ENCODE measurements at regions of chr12 and their contacts with region 1.

Region 1: DNA sequence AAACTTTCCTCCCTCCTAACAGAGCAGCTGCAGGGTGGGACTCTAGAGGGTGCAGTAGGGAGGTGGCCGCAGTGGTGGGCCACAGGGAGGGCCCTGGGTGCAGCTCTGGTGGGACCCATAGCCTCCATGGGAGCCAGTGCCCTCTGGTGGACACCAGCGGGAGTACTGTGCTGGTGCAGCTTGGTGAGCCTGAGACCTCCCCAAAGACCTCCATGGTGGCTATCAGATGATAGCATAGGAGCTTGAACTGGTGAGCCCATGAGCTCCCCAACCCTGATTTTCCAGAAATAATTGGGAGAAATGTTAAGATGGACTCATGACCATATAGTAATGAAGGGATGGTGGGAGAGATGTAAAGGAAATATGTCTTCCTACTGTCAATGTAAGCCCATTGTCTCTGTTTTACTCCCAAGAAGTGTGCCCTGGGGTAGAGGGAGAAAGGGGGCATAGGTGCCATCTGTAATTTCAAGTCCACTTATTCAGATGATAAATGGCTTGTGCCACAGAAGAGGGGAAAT is 98.7 kb downstream of the GAS2L3 start:
- DNase-seq: peak; percentile 85
- ATAC-seq: peak; percentile 97
- H3K4me3 Mint-ChIP-seq: no peak overlapping the region
- H3K27ac Mint-ChIP-seq: no peak overlapping the region
- H3K4me1 Mint-ChIP-seq: no peaks in the 10 kb centered on the region
- H3K27me3 Mint-ChIP-seq: no peaks in the 10 kb centered on the region; the same call in 1 of the 2 replicates
- CTCF ChIP-seq: peak; percentile 79

Region 2: GRCh38 chr12:100348657-100349454 is 323.3 kb before region 1 on chr12:
- CTCF ChIA-PET with region 1: interaction called, 12 read pairs
- POLR2A ChIA-PET with region 1: no interaction called
- DNase-seq: no peak
- ATAC-seq: peak; percentile 52
- H3K4me3 Mint-ChIP-seq: no peak overlapping the region
- H3K27ac Mint-ChIP-seq: no peak overlapping the region
- H3K4me1 Mint-ChIP-seq: peaks cover 5% of the 10 kb centered on the region; the same call in 1 of the 2 replicates
- H3K27me3 Mint-ChIP-seq: no peaks in the 10 kb centered on the region
- CTCF ChIP-seq: peak; percentile 24; the same call in 1 of the 2 replicates

Region 3: GRCh38 chr12:100504804-100505203 is 167.3 kb before region 1 on chr12:
- CTCF ChIA-PET with region 1: no interaction called
- POLR2A ChIA-PET with region 1: no interaction called
- DNase-seq: no peak
- ATAC-seq: no peak
- H3K4me3 Mint-ChIP-seq: no peak overlapping the region
- H3K27ac Mint-ChIP-seq: peak overlapping the region; percentile 18; the same call in 1 of the 2 replicates
- H3K4me1 Mint-ChIP-seq: no peaks in the 10 kb centered on the region
- H3K27me3 Mint-ChIP-seq: no peaks in the 10 kb centered on the region
- CTCF ChIP-seq: no peak

Region 4: DNA sequence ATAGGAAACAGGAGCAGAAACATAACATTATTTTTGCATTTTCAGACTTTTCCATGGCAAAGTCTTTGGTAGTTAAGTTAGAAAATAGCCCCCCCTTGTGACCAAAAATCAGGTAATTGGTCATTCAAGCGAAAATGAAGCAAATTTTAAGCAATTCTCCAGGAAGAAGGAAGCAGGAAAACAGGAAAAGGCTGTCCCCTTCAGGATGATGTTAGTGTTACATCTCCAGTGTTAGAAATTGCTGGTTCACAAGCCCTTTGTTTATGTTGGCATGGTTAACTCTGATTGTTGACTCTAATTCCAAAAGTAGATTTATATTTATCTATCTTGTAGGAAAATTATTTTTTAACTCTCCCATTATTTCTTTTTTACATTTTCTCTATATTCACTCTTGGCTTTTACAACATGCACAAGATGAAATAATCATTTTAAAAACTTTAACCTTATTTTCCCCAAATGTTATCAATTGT is 117.5 kb before region 1 on chr12:
- CTCF ChIA-PET with region 1: interaction called, 13 read pairs
- POLR2A ChIA-PET with region 1: no interaction called
- DNase-seq: no peak
- ATAC-seq: peak; percentile 89
- H3K4me3 Mint-ChIP-seq: no peak overlapping the region
- H3K27ac Mint-ChIP-seq: no peak overlapping the region
- H3K4me1 Mint-ChIP-seq: peaks cover 5% of the 10 kb centered on the region; the same call in 1 of the 2 replicates
- H3K27me3 Mint-ChIP-seq: no peaks in the 10 kb centered on the region
- CTCF ChIP-seq: peak; percentile 84

Region 5: GRCh38 chr12:100661300-100661951 is 10.7 kb before region 1 on chr12:
- CTCF ChIA-PET with region 1: interaction called, 33 read pairs
- POLR2A ChIA-PET with region 1: no interaction called
- DNase-seq: no peak
- ATAC-seq: no peak; the same call in 1 of the 2 replicates
- H3K4me3 Mint-ChIP-seq: no peak overlapping the region
- H3K27ac Mint-ChIP-seq: no peak overlapping the region
- H3K4me1 Mint-ChIP-seq: peaks cover 12% of the 10 kb centered on the region
- H3K27me3 Mint-ChIP-seq: peaks cover 19% of the 10 kb centered on the region
- CTCF ChIP-seq: no peak

Region 6: GRCh38 chr12:100699209-100699608 is 27.1 kb after region 1 on chr12:
- CTCF ChIA-PET with region 1: interaction called, 17 read pairs
- POLR2A ChIA-PET with region 1: no interaction called
- DNase-seq: no peak
- ATAC-seq: no peak
- H3K4me3 Mint-ChIP-seq: no peak overlapping the region
- H3K27ac Mint-ChIP-seq: no peak overlapping the region
- H3K4me1 Mint-ChIP-seq: peaks cover 8% of the 10 kb centered on the region
- H3K27me3 Mint-ChIP-seq: no peaks in the 10 kb centered on the region
- CTCF ChIP-seq: no peak

Region 7: DNA sequence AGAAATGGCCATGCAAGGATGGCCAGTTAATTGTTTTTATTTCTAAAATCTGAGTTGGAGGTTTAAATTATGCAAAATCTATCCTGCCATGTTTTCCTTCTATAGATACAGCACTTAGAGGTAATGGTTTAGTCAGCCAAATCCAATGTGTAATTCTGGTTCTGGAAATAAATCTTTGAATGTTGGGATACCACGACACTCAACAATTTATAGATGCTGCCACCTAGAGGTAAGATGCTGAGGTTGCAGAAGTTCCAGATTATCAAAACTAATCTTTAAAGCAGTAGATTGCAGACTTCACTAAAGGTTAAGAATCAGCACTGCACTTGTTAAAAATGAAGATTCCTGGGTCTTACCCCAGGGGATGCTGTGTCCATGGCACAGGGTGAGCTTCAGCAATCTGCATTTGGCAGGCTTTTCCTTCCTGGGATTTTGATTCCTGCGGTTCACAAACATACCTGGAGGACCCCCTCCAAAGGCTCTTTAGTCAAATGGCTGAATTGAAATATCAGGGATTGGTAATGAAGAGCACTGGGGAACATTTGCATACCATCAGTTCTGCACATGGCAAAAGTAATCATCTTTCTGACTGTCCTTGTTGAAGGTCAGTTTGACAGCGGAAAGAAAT is 69.1 kb after region 1 on chr12:
- CTCF ChIA-PET with region 1: interaction called, 22 read pairs
- POLR2A ChIA-PET with region 1: no interaction called
- DNase-seq: no peak
- ATAC-seq: peak; percentile 34
- H3K4me3 Mint-ChIP-seq: no peak overlapping the region
- H3K27ac Mint-ChIP-seq: no peak overlapping the region
- H3K4me1 Mint-ChIP-seq: 0 out of 2 replicates have a peak, but pooled peaks cover 2% of the 10 kb centered on the region
- H3K27me3 Mint-ChIP-seq: no peaks in the 10 kb centered on the region
- CTCF ChIP-seq: peak; percentile 60

Region 8: DNA sequence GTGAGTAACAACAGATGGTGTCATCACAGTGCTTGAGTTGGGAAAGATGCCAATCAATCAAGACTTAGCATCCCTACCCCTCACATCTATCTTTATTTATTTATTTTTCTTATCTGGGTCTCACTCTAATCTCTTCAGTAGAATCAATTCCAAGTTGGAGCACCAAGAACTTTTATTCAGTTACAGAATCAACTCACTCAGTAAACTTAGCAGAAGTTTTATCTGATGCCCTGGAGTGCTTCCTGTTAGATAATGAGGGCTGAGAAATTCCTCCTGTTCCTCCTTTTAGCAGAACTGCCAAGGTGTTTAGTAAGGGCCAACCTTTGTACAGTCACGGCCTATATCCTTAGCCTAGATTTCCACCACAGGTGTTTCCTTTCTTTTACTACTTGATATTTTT is 549.2 kb after region 1 on chr12:
- CTCF ChIA-PET with region 1: no interaction called
- POLR2A ChIA-PET with region 1: no interaction called
- DNase-seq: no peak
- ATAC-seq: no peak
- H3K4me3 Mint-ChIP-seq: no peak overlapping the region
- H3K27ac Mint-ChIP-seq: no peak overlapping the region
- H3K4me1 Mint-ChIP-seq: no peaks in the 10 kb centered on the region
- H3K27me3 Mint-ChIP-seq: no peaks in the 10 kb centered on the region; the same call in 1 of the 2 replicates
- CTCF ChIP-seq: no peak

Measured in WTC11 (cell line).